ENCODE measurements at regions of chr2 and their contacts with region 1.

Region 1: GRCh38 chr2:170815746-170816503 is 762 bp upstream of the GAD1 start:
- DNase-seq: peak; percentile 90
- ATAC-seq: peak; percentile 38
- H3K4me3 Mint-ChIP-seq: peak overlapping the region; percentile 84
- H3K27ac Mint-ChIP-seq: no peak overlapping the region
- H3K4me1 Mint-ChIP-seq: peaks cover 59% of the 10 kb centered on the region
- H3K27me3 Mint-ChIP-seq: peaks cover 82% of the 10 kb centered on the region
- CTCF ChIP-seq: peak; percentile 74

Region 2: GRCh38 chr2:170235860-170236679 is 579.9 kb before region 1 on chr2:
- CTCF ChIA-PET with region 1: interaction called, 47 read pairs
- POLR2A ChIA-PET with region 1: no interaction called
- DNase-seq: peak; percentile 36
- ATAC-seq: peak; percentile 85
- H3K4me3 Mint-ChIP-seq: no peak overlapping the region
- H3K27ac Mint-ChIP-seq: no peak overlapping the region
- H3K4me1 Mint-ChIP-seq: peaks cover 27% of the 10 kb centered on the region
- H3K27me3 Mint-ChIP-seq: peaks cover 7% of the 10 kb centered on the region
- CTCF ChIP-seq: peak; percentile 43

Region 3: DNA sequence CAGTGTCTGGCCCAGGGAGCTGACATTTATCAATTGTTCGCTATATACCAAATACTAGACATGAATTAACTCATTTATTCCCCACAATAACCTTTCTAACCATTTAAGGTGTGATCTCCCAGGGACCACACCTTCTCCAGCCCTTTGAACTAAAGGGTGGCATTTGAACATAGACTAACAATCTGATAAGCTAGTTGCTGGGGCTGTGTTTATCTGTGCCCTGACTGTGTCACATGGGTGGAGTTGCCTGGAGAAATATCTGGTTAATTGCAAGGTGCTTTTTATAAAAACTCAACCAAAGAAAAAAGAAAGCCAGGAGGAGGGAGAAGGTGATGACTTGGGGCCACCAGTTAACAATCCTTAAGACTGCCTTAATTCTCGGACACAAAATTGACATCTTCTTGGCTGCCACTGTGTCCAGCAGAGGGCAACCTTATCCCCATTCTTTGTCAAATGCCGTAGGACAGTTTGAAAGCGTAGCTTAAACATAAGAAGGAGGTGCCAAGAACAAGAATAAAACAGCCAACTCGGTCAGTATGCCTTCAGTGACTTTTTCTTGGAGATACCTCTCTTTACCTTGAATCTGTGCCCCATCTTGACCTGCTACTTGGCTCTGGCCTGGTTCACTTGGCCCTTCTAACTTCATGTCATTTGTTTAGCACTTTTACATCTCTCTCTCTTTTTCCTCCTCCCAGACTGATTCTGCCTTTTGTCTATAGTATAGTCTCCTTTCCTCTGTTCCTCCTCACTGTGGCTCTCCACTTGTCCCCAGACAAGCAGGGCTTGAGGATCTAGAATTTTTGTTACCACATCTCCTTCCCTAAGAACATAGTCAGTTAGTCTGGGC is 454.6 kb before region 1 on chr2:
- CTCF ChIA-PET with region 1: interaction called, 26 read pairs
- POLR2A ChIA-PET with region 1: no interaction called
- DNase-seq: peak; percentile 66
- ATAC-seq: peak; percentile 84
- H3K4me3 Mint-ChIP-seq: no peak overlapping the region
- H3K27ac Mint-ChIP-seq: no peak overlapping the region
- H3K4me1 Mint-ChIP-seq: peaks cover 41% of the 10 kb centered on the region
- H3K27me3 Mint-ChIP-seq: peaks cover 5% of the 10 kb centered on the region; the same call in 1 of the 2 replicates
- CTCF ChIP-seq: peak; percentile 36

Region 4: DNA sequence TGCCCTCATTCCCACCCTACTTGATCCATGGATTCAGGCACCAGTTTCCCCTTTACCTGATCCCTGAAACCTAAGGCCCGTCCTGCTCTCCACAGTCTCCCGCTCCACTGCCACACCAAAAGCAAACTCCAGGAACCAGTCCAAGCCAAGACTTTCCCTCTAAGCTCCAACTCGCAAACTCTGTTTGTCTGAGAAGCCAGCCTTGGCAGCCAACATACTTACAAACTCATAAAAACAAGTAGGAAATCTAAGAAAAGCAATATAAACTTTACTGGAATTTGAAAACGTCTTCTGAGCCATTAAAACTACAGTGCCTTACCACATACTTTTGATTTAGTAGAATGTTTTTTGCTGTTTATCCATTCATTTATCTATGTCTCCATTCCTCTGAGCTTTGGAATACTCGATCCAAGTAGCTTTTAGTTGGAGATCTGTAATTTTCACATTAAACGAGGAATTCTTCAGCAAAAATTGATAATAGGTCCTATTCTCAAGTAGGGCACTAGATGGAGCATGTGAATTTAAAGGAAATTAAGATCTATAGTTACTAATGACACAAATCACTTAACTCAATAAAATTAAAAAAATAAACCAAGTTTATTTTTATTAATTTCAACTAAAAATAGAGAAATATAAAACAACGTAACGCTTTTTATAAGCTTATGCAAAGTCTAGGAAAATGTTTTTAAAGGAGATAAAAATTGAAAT is 438.3 kb before region 1 on chr2:
- CTCF ChIA-PET with region 1: interaction called, 24 read pairs
- POLR2A ChIA-PET with region 1: no interaction called
- DNase-seq: no peak
- ATAC-seq: no peak
- H3K4me3 Mint-ChIP-seq: no peak overlapping the region
- H3K27ac Mint-ChIP-seq: no peak overlapping the region
- H3K4me1 Mint-ChIP-seq: peaks cover 8% of the 10 kb centered on the region
- H3K27me3 Mint-ChIP-seq: peaks cover 4% of the 10 kb centered on the region
- CTCF ChIP-seq: no peak

Region 5: DNA sequence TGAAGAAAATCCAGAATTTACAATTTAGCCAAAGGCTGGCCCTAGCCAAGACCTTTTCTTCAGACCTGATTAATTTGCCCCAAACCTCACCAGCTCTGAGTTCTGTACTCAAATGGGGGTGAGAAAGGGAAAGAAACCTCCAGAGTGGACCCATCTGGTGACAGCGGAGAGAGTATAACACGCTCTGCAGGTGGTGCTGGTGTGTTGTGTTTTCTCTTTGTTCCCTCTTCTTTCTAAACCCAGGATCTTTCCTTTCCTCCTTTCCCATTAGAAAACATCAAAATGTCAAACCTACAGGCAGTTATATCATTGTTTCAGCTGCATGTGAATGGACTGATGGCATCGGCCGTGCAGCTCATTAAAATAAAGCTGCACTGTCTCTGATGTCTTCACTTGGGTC is 354.0 kb before region 1 on chr2:
- CTCF ChIA-PET with region 1: interaction called, 10 read pairs
- POLR2A ChIA-PET with region 1: no interaction called
- DNase-seq: no peak
- ATAC-seq: peak; percentile 58
- H3K4me3 Mint-ChIP-seq: no peak overlapping the region
- H3K27ac Mint-ChIP-seq: no peak overlapping the region
- H3K4me1 Mint-ChIP-seq: peaks cover 14% of the 10 kb centered on the region
- H3K27me3 Mint-ChIP-seq: peaks cover 5% of the 10 kb centered on the region; the same call in 1 of the 2 replicates
- CTCF ChIP-seq: no peak